ENCODE measurements at regions of chr3 and their contacts with region 1.

Region 1: DNA sequence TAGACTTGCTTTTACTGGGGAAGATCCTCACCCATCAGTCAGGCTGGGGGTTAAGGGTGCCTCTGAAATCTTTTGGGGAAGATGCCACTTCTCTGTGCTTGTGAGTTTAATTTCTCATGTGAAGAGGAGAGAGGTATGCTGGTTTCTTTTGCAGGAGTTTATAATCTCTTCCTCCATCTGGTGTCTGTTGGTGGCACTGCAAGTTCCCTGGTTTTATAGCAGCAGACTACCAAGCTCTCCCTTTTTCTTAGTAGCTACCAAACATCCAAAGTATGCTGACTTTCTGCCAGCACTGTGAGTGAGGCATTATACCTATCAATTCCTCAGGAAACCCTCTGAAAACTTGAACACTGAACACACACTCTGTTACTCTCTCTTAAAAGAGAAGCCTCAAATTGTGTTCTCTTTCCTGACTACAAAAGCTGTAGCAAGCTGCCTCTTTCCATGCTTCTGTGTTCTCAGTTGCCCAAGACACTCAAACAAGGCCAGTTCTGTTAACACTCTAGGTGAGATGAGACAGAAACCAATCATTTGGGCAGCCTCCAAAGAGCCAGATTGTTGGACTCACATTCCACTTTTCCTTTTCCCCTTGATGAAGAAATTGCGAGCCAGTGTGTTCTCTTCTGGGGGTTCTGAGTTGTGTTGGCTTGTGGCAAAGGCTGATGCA is 299.5 kb downstream of the GAP43 start:
- DNase-seq: peak; percentile 16
- H3K4me3 ChIP-seq: no peak overlapping the region
- CTCF ChIP-seq: peak; percentile 52

Region 2: GRCh38 chr3:115905871-115906270 is 16.9 kb before region 1 on chr3:
- CTCF ChIA-PET with region 1: interaction called, 19 read pairs
- POLR2A ChIA-PET with region 1: no interaction called
- DNase-seq: no peak
- H3K4me3 ChIP-seq: no peak overlapping the region
- CTCF ChIP-seq: no peak

Region 3: DNA sequence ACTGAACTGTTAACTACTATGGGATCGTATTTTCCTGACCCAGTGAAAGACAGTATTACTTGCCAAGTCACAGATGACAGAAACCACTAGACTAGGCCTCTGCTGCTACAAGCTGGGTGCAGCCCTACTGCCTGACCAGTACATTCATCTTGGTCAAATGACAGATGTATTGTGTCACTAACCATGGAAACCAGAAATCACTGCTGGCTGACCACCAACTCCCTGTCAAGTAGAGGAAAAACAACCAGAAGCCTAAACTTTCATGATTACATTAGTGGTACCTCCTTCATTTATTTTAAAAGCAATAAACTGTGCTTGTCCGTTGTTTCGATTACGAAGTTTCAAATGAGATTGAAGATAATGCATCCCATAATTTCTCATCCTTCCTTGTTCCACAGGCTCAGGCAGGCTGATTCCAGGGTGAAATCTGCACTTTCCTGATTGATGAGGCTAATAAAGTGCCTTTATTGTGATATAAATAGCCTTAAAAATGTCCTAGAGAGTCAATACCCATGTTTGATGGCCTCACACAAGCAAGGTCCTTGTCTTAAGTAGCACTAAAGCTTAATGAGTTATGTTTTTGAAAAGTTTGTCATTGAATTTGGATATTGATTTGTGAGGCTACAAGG is 212.8 kb after region 1 on chr3:
- CTCF ChIA-PET with region 1: no interaction called
- POLR2A ChIA-PET with region 1: no interaction called
- DNase-seq: peak; percentile 5
- H3K4me3 ChIP-seq: no peak overlapping the region
- CTCF ChIP-seq: no peak